ENCODE measurements at regions of chr20 and their contacts with region 1.

Region 1: DNA sequence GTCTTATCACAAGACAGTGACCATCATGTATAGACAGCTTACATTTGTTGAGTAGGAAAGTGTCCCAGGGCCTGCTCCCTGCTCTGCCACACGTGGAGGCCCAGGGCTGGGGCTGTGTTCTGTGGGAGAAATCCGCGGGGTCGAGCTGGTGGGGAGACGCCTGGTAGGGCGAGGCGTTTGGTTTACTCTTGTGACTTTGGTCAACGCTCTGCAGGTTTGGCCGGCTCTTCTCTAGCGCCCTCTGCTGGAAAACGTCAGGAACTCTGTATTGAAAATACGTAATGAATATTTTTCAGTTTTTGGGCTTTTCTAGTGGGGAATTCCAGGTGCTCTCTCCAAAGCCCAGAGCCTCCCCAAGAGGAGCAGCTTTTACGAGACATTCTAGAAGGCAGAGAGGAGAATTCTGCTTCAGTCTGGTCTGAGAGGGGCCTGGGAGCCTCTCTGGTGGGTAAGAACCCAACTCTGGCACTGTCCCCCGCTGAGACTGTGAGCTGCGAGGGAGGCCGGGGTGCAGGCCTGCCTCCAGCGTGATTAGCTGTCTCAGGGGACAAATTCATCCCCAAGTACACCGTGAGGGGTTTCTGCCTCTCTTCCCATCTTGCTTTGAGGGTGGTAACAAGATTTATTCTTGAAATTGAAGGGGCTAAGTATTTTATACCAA is 112.6 kb upstream of the RALGAPA2 start:
- DNase-seq: peak; percentile 75
- H3K4me3 ChIP-seq: no peak overlapping the region
- H3K27ac ChIP-seq: no peak overlapping the region
- H3K4me1 ChIP-seq: no peaks in the 10 kb centered on the region
- H3K27me3 ChIP-seq: no peaks in the 10 kb centered on the region
- CTCF ChIP-seq: peak; percentile 78

Region 2: GRCh38 chr20:20666359-20666758 is 158.7 kb before region 1 on chr20:
- intact Hi-C with region 1: loop called (anchors 2 kb)
- DNase-seq: no peak
- H3K4me3 ChIP-seq: no peak overlapping the region
- H3K27ac ChIP-seq: no peak overlapping the region
- H3K4me1 ChIP-seq: no peaks in the 10 kb centered on the region
- H3K27me3 ChIP-seq: no peaks in the 10 kb centered on the region
- CTCF ChIP-seq: no peak